ENCODE measurements at regions of chr2 and their contacts with region 1.

Region 1: GRCh38 chr2:111883661-111884591 is at the start of gene ANAPC1:
- DNase-seq: peak; percentile 68
- ATAC-seq: peak; percentile 98
- H3K4me3 ChIP-seq: peak within 1 kb of the TSS; percentile 97 to 98
- H3K27ac ChIP-seq: peak within 1 kb of the TSS; percentile 95
- H3K4me1 ChIP-seq: peaks cover 4% of the 10 kb centered on the region
- H3K27me3 ChIP-seq: no peaks in the 10 kb centered on the region
- CTCF ChIP-seq: no peak
- total RNA-seq, gene ANAPC1: 75.1 TPM

Region 2: GRCh38 chr2:111905990-111906735 is 22.2 kb after region 1 on chr2:
- CTCF ChIA-PET with region 1: no interaction called
- POLR2A ChIA-PET with region 1: no interaction called
- in situ Hi-C with region 1: no loop called
- intact Hi-C with region 1: no loop called
- DNase-seq: no peak
- ATAC-seq: peak; percentile 74
- H3K4me3 ChIP-seq: peak overlapping the region in 1 of 2 experiments; percentile 21; a peak in 2 of 4 replicates
- H3K27ac ChIP-seq: peak overlapping the region; percentile 52; the same call in 1 of the 2 replicates
- H3K4me1 ChIP-seq: peaks cover 13% of the 10 kb centered on the region; the same call in 1 of the 2 replicates
- H3K27me3 ChIP-seq: no peaks in the 10 kb centered on the region
- CTCF ChIP-seq: no peak

Region 3: GRCh38 chr2:111919794-111920608 is 36.1 kb after region 1 on chr2:
- CTCF ChIA-PET with region 1: no interaction called
- POLR2A ChIA-PET with region 1: no interaction called
- in situ Hi-C with region 1: no loop called
- intact Hi-C with region 1: no loop called
- DNase-seq: no peak
- ATAC-seq: no peak
- H3K4me3 ChIP-seq: no peak overlapping the region
- H3K27ac ChIP-seq: no peak overlapping the region
- H3K4me1 ChIP-seq: 0 out of 2 replicates have a peak, but pooled peaks cover 3% of the 10 kb centered on the region
- H3K27me3 ChIP-seq: no peaks in the 10 kb centered on the region
- CTCF ChIP-seq: no peak

Region 4: GRCh38 chr2:111930875-111931274 is 46.9 kb after region 1 on chr2:
- CTCF ChIA-PET with region 1: no interaction called
- POLR2A ChIA-PET with region 1: no interaction called
- in situ Hi-C with region 1: no loop called
- intact Hi-C with region 1: no loop called
- DNase-seq: no peak
- ATAC-seq: no peak
- H3K4me3 ChIP-seq: no peak overlapping the region
- H3K27ac ChIP-seq: no peak overlapping the region
- H3K4me1 ChIP-seq: no peaks in the 10 kb centered on the region
- H3K27me3 ChIP-seq: no peaks in the 10 kb centered on the region
- CTCF ChIP-seq: no peak

Region 5: DNA sequence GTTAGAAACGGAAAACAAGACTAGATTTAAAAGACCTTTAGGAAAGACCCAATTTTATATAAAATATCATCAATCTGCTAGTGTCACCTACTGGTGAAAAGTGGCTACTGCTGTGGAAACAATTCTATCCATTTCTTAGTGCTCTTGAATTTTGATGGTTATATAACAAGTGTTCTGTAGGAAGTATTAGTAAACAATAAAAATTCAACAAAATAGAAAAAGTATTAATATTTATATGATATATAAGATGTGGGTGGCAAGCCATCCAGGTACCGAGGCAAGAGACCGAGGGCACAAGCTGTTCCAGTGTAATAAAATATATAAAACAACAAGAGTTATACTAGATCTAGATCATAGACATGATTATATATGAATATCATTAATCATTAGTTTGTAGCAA is 165.0 kb after region 1 on chr2:
- CTCF ChIA-PET with region 1: interaction called, 9 read pairs
- POLR2A ChIA-PET with region 1: no interaction called
- in situ Hi-C with region 1: no loop called
- intact Hi-C with region 1: loop called (anchors 2 kb)
- DNase-seq: peak; percentile 54
- ATAC-seq: peak; percentile 71; the same call in 1 of the 2 replicates
- H3K4me3 ChIP-seq: no peak overlapping the region
- H3K27ac ChIP-seq: no peak overlapping the region
- H3K4me1 ChIP-seq: peaks cover 6% of the 10 kb centered on the region
- H3K27me3 ChIP-seq: no peaks in the 10 kb centered on the region
- CTCF ChIP-seq: no peak; the same call in 1 of the 2 replicates